Activated CD4-positive, alpha-beta memory T cell treated with anti-CD3 and anti-CD28 coated beads for 36 hours (primary cell): ENCODE measurements at regions of chr12 and their contacts with region 1.

Region 1: DNA sequence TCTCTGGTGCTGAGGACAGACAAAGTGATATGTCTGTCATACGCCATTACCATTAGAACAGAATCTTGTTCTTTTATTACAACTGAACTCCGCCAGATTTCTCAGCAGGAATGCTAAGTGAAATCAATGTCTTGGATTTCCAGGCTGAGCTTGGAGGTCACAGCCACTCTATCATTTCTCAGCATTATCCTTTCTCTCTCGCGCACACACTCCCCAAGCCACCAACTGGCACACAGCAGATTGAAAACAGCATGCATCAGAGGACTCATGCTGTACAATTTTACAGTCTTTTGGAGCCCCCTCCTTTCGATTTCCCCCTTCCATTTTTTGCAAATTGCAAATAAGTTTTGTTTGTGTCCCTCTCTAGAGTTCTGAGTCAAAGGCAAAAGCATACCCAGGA is 348.6 kb downstream of the SOX5 start:
- DNase-seq: no peak
- H3K4me3 Mint-ChIP-seq: no peak overlapping the region
- H3K27ac Mint-ChIP-seq: no peak overlapping the region
- H3K4me1 Mint-ChIP-seq: no peaks in the 10 kb centered on the region
- H3K27me3 Mint-ChIP-seq: no peaks in the 10 kb centered on the region

Region 2: DNA sequence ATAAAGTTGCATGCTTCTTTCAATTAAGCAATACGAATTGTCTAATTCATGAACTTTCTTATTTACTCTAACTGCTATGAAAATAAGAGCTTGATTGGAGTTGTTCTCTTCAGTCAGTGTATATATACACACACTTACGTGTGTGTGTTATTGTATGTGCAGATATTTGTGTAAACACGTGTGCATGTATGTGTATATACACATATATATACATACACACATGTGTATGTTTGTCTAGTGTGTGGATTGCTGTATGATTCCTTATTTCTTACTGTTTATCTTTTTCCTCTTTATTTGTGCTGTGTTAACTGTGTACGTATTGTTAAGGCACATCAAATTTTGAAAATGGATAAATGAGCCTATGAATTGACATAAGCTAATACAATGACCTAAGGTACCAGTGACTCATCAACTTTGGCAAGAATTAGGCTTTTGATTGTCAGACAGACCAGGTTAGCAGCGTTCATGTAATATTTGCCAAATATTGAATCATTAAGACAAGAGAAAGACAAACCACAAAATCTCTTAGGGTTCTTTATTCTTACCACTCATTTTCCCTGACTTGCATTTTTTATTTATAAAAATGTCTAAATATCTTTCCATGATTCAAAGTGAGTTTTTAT is 75.4 kb before region 1 on chr12:
- CTCF ChIA-PET with region 1: no interaction called
- POLR2A ChIA-PET with region 1: no interaction called
- intact Hi-C with region 1: loop called (anchors 2 kb)
- DNase-seq: no peak
- H3K4me3 Mint-ChIP-seq: no peak overlapping the region
- H3K27ac Mint-ChIP-seq: no peak overlapping the region
- H3K4me1 Mint-ChIP-seq: no peaks in the 10 kb centered on the region
- H3K27me3 Mint-ChIP-seq: no peaks in the 10 kb centered on the region

Region 3: GRCh38 chr12:23611320-23611719 is 10.4 kb after region 1 on chr12:
- CTCF ChIA-PET with region 1: no interaction called
- POLR2A ChIA-PET with region 1: no interaction called
- intact Hi-C with region 1: no loop called
- DNase-seq: no peak
- H3K4me3 Mint-ChIP-seq: no peak overlapping the region
- H3K27ac Mint-ChIP-seq: no peak overlapping the region
- H3K4me1 Mint-ChIP-seq: no peaks in the 10 kb centered on the region
- H3K27me3 Mint-ChIP-seq: no peaks in the 10 kb centered on the region